MCF 10A (cell line): ENCODE measurements at regions of chr2 and their contacts with region 1.

Region 1: DNA sequence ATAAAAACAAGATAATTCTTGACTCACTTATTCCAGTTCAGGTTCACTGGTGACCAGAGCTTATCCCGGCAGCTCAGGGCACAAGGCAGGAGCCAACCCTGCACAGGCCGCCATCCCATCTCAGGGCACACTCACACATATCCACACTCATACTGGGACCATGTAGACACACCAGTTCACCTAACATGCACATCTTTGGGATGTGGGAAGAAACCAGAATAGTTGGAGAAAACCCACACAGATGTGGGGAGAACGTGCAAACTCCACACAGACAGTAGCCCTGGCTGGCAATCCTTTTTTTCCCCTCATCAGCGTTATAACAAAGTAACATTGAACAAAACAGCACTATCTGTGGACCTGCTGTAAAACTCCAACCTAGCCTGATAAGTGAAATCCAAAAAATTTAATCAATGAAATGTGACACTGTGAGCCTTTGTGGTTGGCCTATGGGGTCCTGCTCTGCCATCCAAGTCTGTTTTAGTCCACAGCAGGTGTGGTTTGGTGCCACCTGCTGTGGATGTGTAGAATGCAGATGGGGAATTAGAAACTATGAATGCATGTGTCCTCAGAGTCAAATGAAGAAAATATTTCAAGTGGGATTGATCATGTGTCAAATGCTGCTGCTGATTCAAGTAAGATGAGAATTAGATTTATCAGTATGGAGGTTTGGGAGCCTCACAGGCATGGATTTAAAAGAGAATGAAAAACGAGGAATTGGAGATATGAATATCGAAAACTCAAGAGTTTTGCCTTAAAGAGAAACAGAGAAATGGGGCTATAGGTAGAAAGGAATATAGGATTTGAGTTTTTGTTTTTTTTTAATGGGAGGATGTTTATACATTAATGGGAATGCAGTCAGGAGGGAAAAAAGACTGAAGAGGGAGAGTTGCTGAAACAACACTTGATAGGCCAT is 47.0 kb downstream of the UGP2 start:
- DNase-seq: peak; percentile 67
- H3K4me3 Mint-ChIP-seq: no peak overlapping the region
- H3K27ac Mint-ChIP-seq: peak overlapping the region; percentile 17
- H3K4me1 Mint-ChIP-seq: peaks cover 5% of the 10 kb centered on the region
- H3K27me3 Mint-ChIP-seq: no peaks in the 10 kb centered on the region
- CTCF ChIP-seq: peak; percentile 71

Region 2: GRCh38 chr2:63692002-63692606 is 196.6 kb before region 1 on chr2:
- CTCF ChIA-PET with region 1: interaction called, 5 read pairs
- POLR2A ChIA-PET with region 1: interaction called, 3 read pairs
- intact Hi-C with region 1: loop called (anchors 1 kb)
- DNase-seq: peak; percentile 48
- H3K4me3 Mint-ChIP-seq: no peak overlapping the region
- H3K27ac Mint-ChIP-seq: no peak overlapping the region
- H3K4me1 Mint-ChIP-seq: peaks cover 5% of the 10 kb centered on the region
- H3K27me3 Mint-ChIP-seq: no peaks in the 10 kb centered on the region
- CTCF ChIP-seq: peak; percentile 63

Region 3: DNA sequence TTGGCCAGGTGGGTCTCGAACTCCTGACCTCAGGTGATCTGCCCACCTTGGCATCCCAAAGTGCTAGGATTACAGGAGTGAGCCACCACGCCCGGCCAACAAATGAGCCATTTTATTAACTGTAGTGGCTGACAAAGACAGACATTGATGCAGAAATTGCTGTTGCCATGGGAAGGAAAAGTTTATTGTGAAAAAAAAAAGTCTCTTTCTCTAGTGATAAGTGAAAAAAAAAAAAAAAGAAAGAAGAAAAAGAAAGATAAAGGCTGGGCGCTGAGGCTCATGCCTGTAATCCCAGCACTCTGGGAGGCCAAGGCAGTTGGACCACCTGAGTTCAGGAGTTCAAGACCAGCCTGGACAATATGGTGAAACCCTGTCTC is 1281.0 kb after region 1 on chr2:
- CTCF ChIA-PET with region 1: no interaction called
- POLR2A ChIA-PET with region 1: no interaction called
- intact Hi-C with region 1: no loop called
- DNase-seq: no peak
- H3K4me3 Mint-ChIP-seq: no peak overlapping the region
- H3K27ac Mint-ChIP-seq: no peak overlapping the region
- H3K4me1 Mint-ChIP-seq: no peaks in the 10 kb centered on the region
- H3K27me3 Mint-ChIP-seq: no peaks in the 10 kb centered on the region
- CTCF ChIP-seq: no peak